ENCODE measurements at regions of chr7 and their contacts with region 1.

Region 1: DNA sequence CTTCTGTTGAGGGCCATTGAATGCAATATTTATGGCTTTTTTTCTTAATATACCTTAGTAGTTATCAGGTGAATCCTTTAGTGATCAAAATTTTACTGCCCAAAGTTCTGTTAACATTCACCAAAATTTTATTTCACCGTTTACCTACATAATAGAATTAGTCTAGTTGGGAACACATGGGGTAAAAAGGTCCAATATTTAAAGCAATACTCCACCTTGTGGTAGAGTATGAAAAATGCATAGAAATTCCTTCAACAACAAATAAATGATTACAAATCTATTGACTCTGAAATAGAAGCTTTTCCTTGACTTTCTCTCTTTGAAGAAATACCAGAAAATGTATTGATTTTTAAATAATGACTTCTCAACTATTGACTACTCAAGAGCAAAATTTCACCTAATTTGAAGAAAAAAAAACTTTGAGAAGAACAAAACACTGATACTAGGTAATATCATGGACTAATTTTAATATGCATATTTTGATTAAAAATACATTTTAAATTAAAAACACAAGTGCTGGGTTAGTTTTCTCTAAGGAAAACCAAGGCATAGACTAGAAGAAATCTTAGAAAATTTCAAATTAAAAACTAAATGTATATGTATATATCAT is 43.3 kb downstream of the POLR1F start:
- DNase-seq: peak; percentile 54
- ATAC-seq: peak; percentile 57
- H3K4me3 ChIP-seq: no peak overlapping the region
- H3K4me3 Mint-ChIP-seq: peak overlapping the region; percentile 27
- H3K27ac ChIP-seq: no peak overlapping the region
- H3K27ac Mint-ChIP-seq: no peak overlapping the region
- H3K4me1 ChIP-seq: peaks cover 9 to 17% of the 10 kb centered on the region in 2 donors
- H3K4me1 Mint-ChIP-seq: peaks cover 16% of the 10 kb centered on the region
- H3K27me3 ChIP-seq: no peaks in the 10 kb centered on the region
- H3K27me3 Mint-ChIP-seq: no peaks in the 10 kb centered on the region
- CTCF ChIP-seq: peak; percentile 85

Region 2: DNA sequence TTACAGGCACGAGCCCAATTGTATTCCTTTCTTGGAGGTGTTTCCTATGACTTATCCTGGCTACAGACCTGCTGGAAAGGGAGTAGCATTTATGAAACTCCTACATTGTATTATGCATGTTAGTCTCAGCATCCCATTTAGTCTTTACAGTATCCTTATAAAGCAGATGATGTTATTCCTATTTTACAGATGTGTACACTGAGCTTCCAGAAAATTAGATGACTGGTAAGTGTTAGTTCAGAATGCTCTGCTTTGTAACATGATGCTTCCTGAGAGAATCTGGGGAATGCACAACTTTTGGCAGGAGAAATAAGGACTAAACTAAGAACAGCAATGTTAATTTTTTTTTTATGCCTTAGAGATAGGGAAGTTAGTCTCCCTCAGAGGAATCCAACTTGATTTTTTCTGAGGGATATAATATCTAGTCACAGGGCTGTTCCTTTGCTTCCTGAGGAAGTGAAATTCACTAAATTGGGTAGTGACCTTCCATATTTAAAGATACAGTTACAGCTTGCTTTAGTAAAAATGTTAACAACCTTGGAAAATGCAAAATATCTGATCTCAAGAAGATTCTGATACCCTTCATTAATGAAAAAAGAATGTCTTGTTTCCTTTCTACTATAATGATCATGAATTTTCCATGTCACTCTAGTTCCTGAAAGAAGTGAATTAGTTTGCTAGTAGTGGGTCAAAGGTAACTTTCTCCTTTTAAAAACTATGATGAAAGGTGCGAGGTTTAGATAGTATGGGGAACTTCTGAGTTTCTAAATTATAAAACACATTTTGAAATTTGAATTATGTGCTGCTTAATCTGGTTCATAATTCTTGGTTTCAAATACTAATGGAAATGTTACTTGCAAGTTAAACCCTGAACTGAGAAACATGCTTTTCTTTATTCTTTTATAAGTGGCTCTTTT is 1443.9 kb before region 1 on chr7:
- CTCF ChIA-PET with region 1: no interaction called
- POLR2A ChIA-PET with region 1: no interaction called
- intact Hi-C with region 1: loop called (anchors 10 kb)
- DNase-seq: no peak
- ATAC-seq: no peak
- H3K4me3 ChIP-seq: no peak overlapping the region
- H3K4me3 Mint-ChIP-seq: no peak overlapping the region
- H3K27ac ChIP-seq: peak overlapping the region in 1 of 2 donors; percentile 4
- H3K27ac Mint-ChIP-seq: peak overlapping the region; percentile 22
- H3K4me1 ChIP-seq: peaks cover 23 to 53% of the 10 kb centered on the region in 2 donors
- H3K4me1 Mint-ChIP-seq: peaks cover 54% of the 10 kb centered on the region
- H3K27me3 ChIP-seq: no peaks in the 10 kb centered on the region
- H3K27me3 Mint-ChIP-seq: no peaks in the 10 kb centered on the region
- CTCF ChIP-seq: no peak

Region 3: GRCh38 chr7:18873734-18874336 is 791.7 kb before region 1 on chr7:
- CTCF ChIA-PET with region 1: no interaction called
- POLR2A ChIA-PET with region 1: no interaction called
- intact Hi-C with region 1: loop called (anchors 10 kb)
- DNase-seq: no peak
- ATAC-seq: no peak
- H3K4me3 ChIP-seq: no peak overlapping the region
- H3K4me3 Mint-ChIP-seq: no peak overlapping the region
- H3K27ac ChIP-seq: no peak overlapping the region
- H3K27ac Mint-ChIP-seq: no peak overlapping the region
- H3K4me1 ChIP-seq: no peaks in the 10 kb centered on the region
- H3K4me1 Mint-ChIP-seq: no peaks in the 10 kb centered on the region
- H3K27me3 ChIP-seq: no peaks in the 10 kb centered on the region
- H3K27me3 Mint-ChIP-seq: no peaks in the 10 kb centered on the region
- CTCF ChIP-seq: no peak

Region 4: DNA sequence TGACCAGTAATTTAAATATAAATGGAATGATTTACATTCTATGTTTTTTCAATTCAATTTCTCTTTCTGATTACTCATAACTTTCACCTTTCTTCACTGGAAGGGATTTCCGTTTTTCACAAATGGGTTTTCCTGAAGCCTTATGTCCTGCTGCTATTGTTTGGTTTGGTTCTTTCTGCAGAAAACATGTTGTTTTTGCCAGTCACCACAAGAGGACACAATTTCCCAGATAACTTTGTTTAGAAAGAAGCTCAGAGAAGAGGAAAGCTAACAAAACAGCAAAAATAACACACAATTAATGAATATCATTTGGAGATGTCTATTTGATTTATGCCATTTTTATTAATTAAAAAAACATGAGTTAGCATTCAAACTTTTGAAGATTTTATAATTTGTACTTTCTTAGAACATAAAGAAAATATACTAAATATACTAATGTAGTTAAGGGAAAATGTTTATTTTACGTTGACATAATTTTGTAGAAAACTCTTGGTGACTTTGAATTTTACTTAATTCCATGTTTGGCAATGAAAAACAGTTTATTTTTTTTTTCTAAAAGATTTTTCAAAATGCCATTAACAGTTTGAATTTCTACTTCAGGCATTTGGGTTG is 543.4 kb before region 1 on chr7:
- CTCF ChIA-PET with region 1: no interaction called
- POLR2A ChIA-PET with region 1: no interaction called
- intact Hi-C with region 1: loop called (anchors 5 kb)
- DNase-seq: no peak
- ATAC-seq: no peak
- H3K4me3 ChIP-seq: no peak overlapping the region
- H3K4me3 Mint-ChIP-seq: no peak overlapping the region
- H3K27ac ChIP-seq: no peak overlapping the region
- H3K27ac Mint-ChIP-seq: no peak overlapping the region
- H3K4me1 ChIP-seq: peaks cover 11 to 18% of the 10 kb centered on the region in 2 donors
- H3K4me1 Mint-ChIP-seq: peaks cover 11% of the 10 kb centered on the region
- H3K27me3 ChIP-seq: peaks cover 0 to 33% (median 29%) of the 10 kb centered on the region in 4 experiments
- H3K27me3 Mint-ChIP-seq: peaks cover 57% of the 10 kb centered on the region
- CTCF ChIP-seq: no peak

Region 5: DNA sequence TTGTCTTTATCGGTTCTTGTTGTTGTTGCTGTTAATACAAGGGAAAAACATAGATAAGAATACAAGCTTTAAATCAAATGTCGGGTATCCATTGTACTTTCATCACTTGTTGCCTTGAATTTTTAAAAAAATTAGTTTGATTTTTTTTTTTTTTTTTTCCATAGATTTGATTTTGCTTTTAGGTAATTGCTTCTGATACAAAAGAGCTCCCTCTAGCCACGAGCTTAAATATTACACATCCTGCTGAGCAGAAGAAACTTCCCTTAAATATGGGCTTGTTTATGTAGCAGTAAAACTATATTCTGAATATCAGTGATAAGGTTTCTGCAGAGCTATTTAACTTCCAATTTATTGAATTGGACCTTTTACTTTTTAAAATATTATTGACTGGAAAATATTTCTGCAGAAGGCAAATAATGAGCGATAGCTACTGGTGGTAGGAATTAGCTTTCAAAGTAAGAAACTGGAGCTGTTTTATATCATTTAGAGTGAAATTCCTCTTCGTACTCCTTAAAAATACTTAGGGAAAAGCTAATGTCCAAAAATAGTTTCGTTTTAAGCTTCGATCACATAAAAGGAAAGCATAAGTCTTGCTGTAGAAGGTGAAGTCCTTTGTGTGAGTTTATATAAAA is 173.6 kb before region 1 on chr7:
- CTCF ChIA-PET with region 1: no interaction called
- POLR2A ChIA-PET with region 1: no interaction called
- intact Hi-C with region 1: no loop called
- DNase-seq: peak; percentile 8
- ATAC-seq: no peak
- H3K4me3 ChIP-seq: no peak overlapping the region
- H3K4me3 Mint-ChIP-seq: no peak overlapping the region
- H3K27ac ChIP-seq: no peak overlapping the region
- H3K27ac Mint-ChIP-seq: no peak overlapping the region
- H3K4me1 ChIP-seq: no peaks in the 10 kb centered on the region
- H3K4me1 Mint-ChIP-seq: no peaks in the 10 kb centered on the region
- H3K27me3 ChIP-seq: no peaks in the 10 kb centered on the region
- H3K27me3 Mint-ChIP-seq: no peaks in the 10 kb centered on the region
- CTCF ChIP-seq: peak; percentile 63

Measured in B cell (primary cell).